ENCODE measurements at regions of chr3 and their contacts with region 1.

Region 1: DNA sequence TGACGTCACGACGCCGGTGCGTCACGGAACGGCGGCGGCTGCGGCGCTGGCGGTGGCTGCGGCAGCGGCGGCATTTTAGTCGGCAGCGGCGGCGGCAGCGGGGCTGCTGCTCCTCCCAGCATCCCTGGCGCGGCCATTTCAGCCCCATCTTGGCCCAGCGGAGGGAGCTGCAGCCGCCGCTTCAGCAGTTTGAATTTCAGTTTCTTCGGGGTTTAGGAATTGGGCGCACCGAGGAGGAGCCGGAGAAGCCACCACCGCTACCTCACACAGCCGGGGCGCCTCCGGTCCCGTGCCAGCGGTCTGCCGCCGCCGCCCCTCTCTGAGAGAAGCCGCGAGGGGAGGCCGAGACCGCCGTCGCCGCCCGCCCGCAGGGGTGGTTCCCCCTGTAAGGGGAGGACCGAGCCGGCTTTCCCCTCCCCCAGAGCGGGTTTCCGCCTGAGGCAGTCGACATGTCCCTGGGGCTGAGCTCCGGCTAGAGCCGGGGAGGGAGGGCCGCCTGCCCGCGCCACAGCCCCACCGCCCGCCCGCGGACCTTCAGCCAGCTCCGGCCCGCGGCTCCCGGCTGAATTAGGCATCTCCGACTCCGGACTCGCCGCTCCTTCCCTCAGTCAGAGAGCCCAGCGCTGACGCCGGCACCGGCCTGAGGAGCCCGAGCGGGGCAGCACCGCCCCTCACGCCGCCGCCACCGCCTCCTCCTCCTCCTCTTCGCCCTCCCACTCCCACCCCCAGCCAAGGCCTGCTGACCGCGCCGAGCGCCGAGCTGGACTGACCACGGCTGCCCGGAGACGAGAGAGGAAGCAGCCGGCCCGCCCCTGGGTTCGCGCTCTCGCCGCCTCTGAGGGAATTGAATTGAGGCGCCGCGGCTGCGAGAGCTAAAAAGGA is at the start of gene TSC22D2:
- DNase-seq: peak; percentile 81 to 95
- ATAC-seq: peak; percentile 75 to 85
- H3K4me3 ChIP-seq: peak within 1 kb of the TSS; percentile 78
- H3K27ac ChIP-seq: peak within 1 kb of the TSS; percentile 98 to 99
- H3K4me1 ChIP-seq: peaks cover 19% of the 10 kb centered on the region; the same call in 2 of the 3 replicates
- CTCF ChIP-seq: no peak
- EP300 ChIP-seq: no peak
- POLR2A ChIP-seq: peak; percentile 89
- RAD21 ChIP-seq: peak in 1 of 2 experiments; percentile 38; a peak in 3 of 5 replicates
- polyA plus RNA-seq, gene TSC22D2: 13.8 and 13.9 TPM in 2 replicates

Region 2: DNA sequence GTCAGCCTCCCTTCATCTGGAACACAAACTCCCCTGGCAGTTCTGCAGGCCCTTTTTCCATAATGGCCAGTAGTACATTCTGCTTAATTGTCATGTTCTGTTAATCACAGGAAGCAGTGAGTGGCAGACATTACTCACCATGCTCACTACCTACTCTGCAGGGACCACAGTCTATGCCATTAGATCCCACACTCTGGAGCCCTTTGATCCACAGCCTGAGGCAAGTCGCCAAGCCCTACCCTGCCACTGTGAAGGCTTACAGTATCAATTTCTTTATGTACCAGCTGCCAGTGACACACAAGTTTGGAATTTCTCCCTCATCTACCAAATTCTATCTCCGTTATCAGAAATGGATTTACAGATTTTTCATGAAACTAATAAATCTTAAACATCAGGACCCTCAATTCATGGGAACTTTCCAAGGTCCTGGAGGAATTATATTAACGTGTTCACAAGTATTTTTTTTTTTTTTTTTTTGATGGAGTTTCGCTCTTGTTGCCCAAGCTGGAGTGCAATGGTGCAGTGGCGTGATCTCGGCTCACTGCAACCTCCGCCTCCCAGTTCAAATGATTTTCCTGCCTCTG is 730.0 kb before region 1 on chr3:
- CTCF ChIA-PET with region 1: no interaction called
- POLR2A ChIA-PET with region 1: no interaction called
- DNase-seq: no peak
- ATAC-seq: no peak
- H3K4me3 ChIP-seq: no peak overlapping the region
- H3K27ac ChIP-seq: no peak overlapping the region
- H3K4me1 ChIP-seq: peaks cover 4% of the 10 kb centered on the region; the same call in 1 of the 3 replicates
- CTCF ChIP-seq: no peak
- EP300 ChIP-seq: no peak
- POLR2A ChIP-seq: no peak
- RAD21 ChIP-seq: no peak

Region 3: GRCh38 chr3:150286390-150287147 is 121.9 kb before region 1 on chr3:
- CTCF ChIA-PET with region 1: interaction called, 20 read pairs
- POLR2A ChIA-PET with region 1: no interaction called
- DNase-seq: peak; percentile 47 to 75
- ATAC-seq: peak; percentile 96; a peak in 5 of 6 replicates
- H3K4me3 ChIP-seq: no peak overlapping the region
- H3K27ac ChIP-seq: peak overlapping the region; percentile 17 to 42; a peak in 5 of 6 replicates
- H3K4me1 ChIP-seq: no peaks in the 10 kb centered on the region
- CTCF ChIP-seq: peak; percentile 76
- EP300 ChIP-seq: no peak
- POLR2A ChIP-seq: no peak
- RAD21 ChIP-seq: peak; percentile 72 to 77

Region 4: DNA sequence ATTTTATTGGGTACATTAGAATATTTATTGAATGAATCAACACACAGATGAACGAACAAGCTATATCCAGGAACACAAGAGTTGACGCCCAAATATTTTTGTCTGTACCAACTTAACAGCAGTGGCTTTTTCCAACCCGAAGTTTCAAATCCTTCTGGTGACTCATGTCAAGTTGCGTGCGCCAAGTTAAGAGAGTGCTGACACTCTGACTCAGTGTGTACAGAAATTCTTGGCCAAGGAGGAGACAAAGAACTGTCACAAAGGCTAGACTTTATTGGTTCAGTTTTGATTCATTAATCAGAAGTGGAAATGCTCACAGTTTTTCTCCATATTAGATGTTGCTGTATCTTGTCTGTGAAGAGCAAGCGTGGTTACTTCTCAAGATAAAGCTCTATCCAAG is 60.0 kb before region 1 on chr3:
- CTCF ChIA-PET with region 1: interaction called, 21 read pairs
- POLR2A ChIA-PET with region 1: interaction called, 47 read pairs
- DNase-seq: peak; percentile 81 to 85
- ATAC-seq: peak; percentile 81 to 84
- H3K4me3 ChIP-seq: no peak overlapping the region
- H3K27ac ChIP-seq: peak overlapping the region; percentile 72 to 82
- H3K4me1 ChIP-seq: peaks cover 69% of the 10 kb centered on the region
- CTCF ChIP-seq: no peak
- EP300 ChIP-seq: peak; percentile 55 to 74; a peak in 2 of 5 replicates
- POLR2A ChIP-seq: no peak
- RAD21 ChIP-seq: peak in 1 of 2 experiments; percentile 35; a peak in 3 of 5 replicates

Region 5: GRCh38 chr3:150423761-150424160 is 15.3 kb after region 1 on chr3:
- CTCF ChIA-PET with region 1: interaction called, 20 read pairs
- POLR2A ChIA-PET with region 1: interaction called, 7 read pairs
- DNase-seq: no peak
- ATAC-seq: no peak
- H3K4me3 ChIP-seq: no peak overlapping the region
- H3K27ac ChIP-seq: no peak overlapping the region
- H3K4me1 ChIP-seq: peaks cover 29% of the 10 kb centered on the region
- CTCF ChIP-seq: no peak
- EP300 ChIP-seq: no peak
- POLR2A ChIP-seq: no peak
- RAD21 ChIP-seq: no peak

Region 6: DNA sequence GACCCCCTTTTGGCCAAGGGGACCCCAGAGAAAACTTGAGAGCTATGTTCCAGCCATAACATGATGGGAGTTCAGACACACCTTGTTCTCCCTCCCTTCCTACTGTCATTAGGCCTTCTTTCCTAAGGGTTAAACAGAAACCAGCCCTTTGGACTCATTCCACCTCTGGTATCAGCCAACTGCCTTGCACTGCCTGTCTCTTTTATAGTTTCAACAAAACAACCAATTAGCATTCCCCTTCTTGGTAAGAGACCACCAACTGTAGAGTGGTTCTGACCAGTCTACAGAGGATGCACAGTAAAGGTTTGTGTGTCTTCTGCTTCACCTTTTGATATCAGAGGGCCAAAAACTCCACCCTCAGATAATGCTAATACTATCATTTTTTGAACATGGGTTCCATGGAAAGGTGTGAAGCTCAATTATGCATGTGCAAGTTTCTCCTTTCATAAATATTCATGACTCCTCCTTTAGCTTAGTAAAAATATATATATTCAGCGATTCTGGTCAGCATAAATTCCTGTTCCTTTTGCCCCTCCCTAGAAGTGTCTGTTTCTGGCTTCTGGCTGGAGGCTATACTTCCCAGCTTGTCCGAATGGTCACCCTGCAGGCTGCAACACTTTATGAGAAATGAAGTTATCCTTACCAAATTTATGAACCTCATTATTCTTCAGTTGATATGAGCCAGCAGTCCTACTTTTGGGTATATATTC is 82.0 kb after region 1 on chr3:
- CTCF ChIA-PET with region 1: interaction called, 72 read pairs
- POLR2A ChIA-PET with region 1: interaction called, 5 read pairs
- DNase-seq: no peak
- ATAC-seq: no peak
- H3K4me3 ChIP-seq: no peak overlapping the region
- H3K27ac ChIP-seq: no peak overlapping the region
- H3K4me1 ChIP-seq: 0 out of 3 replicates have a peak, but pooled peaks cover 5% of the 10 kb centered on the region
- CTCF ChIP-seq: no peak
- EP300 ChIP-seq: no peak
- POLR2A ChIP-seq: no peak
- RAD21 ChIP-seq: no peak

Region 7: DNA sequence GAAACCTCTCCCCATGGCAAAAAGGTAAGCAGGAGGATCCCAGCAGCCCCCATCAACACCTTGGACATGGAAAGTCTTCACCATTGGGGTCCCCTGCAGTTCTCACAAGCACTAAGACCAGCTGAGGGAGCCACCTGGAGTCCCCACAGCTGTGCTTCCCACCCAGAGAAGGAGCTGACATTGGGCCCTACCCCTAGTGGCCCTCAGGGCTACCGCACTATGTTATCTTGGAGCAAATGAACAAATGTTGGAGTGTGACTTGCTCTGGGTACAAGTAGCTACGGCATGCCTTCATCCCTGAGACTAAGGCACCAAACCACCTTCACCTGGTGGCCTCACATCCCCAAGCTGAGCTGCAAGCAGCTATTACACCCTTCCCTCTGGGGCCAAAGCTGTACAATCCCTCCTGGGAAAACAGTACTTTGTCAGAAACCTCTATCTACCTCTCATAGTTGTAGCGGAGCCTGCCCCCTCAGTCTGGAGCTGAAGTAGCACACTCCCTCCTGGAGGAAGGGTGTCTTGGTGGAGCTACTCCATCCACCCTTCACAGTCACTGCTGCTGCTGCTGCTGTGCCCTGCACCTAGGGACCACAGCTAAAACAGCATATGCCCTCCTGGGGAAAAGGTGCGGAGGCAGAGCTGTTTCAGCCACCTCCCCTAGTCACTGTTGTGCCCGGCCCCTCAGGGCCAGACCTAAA is 95.1 kb after region 1 on chr3:
- CTCF ChIA-PET with region 1: interaction called, 72 read pairs
- POLR2A ChIA-PET with region 1: no interaction called
- DNase-seq: no peak
- ATAC-seq: peak; percentile 79 to 87
- H3K4me3 ChIP-seq: no peak overlapping the region
- H3K27ac ChIP-seq: no peak overlapping the region
- H3K4me1 ChIP-seq: no peaks in the 10 kb centered on the region
- CTCF ChIP-seq: no peak
- EP300 ChIP-seq: no peak
- POLR2A ChIP-seq: no peak
- RAD21 ChIP-seq: no peak